ENCODE measurements at regions of chr2 and their contacts with region 1.

Region 1: DNA sequence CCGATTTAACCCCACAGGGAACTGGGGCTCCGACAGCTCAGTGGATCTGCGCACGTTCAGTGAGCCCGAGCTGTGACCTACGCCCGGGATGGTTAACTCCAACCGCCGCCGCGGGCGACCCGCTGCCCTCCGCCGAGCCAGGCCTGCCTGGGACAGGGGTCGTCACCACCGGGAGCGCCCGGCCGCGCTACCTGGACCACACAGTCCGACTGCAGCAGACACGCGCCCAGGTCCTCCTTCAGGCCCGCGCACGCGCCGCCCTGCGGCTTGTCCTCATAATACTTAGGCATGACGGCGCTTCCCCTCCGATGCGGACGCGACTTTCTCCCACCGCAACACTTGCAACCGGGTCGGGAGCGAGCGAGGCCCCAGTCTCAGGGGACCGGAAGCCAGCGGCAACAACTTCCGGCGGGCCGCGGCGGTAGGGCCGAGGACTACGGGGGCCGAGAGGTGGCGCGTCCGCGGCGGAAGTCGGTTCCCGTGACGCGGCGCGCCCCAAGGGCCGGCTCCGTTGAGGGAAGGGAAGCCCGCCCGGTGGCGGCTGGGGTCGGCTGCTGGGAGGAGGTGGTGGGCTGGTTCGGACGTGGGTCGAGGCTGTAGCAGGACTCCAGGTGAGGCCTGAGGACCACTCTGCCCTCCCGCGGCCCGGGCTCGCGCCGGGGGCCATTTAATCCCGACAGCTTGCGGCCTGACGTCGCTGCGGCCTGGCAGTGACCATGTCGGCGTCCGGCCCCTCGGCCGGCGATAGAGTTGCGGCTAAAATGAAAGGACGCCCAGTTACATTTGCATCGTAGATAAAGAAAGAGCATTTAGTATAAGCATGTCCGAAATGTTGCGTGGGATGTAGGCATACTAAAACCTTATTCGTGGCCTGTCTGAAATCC is at the starts of genes COA5 and UNC50:
- DNase-seq: peak; percentile 90
- H3K4me3 Mint-ChIP-seq: peak within 1 kb of the TSS; percentile 93
- H3K27ac Mint-ChIP-seq: peak within 1 kb of the TSS; percentile 86
- H3K4me1 Mint-ChIP-seq: peaks cover 56% of the 10 kb centered on the region
- H3K27me3 Mint-ChIP-seq: no peaks in the 10 kb centered on the region
- total RNA-seq, gene COA5: 20.9 and 23.9 TPM in 2 replicates
- total RNA-seq, gene UNC50: 39.6 and 40.1 TPM in 2 replicates

Region 2: GRCh38 chr2:98654699-98655495 is 46.5 kb after region 1 on chr2:
- intact Hi-C with region 1: loop called (anchors 5 kb)
- DNase-seq: no peak
- H3K4me3 Mint-ChIP-seq: peak overlapping the region; percentile 28
- H3K27ac Mint-ChIP-seq: peak overlapping the region; percentile 73
- H3K4me1 Mint-ChIP-seq: peaks cover 77% of the 10 kb centered on the region
- H3K27me3 Mint-ChIP-seq: no peaks in the 10 kb centered on the region